ENCODE measurements at regions of chr1 and their contacts with region 1.

Region 1: GRCh38 chr1:226687426-226687825 is 51.7 kb downstream of the ITPKB start:
- DNase-seq: peak; percentile 74
- H3K4me3 Mint-ChIP-seq: peak overlapping the region; percentile 27
- H3K27ac Mint-ChIP-seq: peak overlapping the region; percentile 100
- H3K4me1 Mint-ChIP-seq: peaks cover 100% of the 10 kb centered on the region
- H3K27me3 Mint-ChIP-seq: no peaks in the 10 kb centered on the region

Region 2: DNA sequence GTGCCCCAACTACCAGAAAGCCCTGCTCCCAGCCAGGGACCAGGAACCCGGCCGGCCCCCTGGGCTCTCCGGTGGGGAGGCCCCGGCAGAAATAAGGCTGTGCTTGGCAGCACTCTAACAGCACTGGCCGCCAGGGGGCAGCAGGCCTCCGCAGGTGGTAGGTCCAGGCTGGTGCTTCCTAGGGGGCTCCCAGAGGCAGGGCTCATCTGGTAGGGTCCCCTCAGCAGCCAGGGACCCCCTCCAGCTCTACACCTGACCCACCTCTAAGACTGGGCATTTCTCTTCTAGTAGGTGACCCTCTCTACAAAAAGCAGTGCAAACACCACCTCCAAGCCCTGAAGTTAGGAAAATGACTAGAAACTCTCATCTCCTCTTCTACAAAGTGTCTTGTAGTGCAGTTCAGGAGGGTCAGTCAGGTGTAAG is 53.2 kb before region 1 on chr1:
- CTCF ChIA-PET with region 1: interaction called, 72 read pairs
- intact Hi-C with region 1: loop called (anchors 1 kb)
- DNase-seq: peak; percentile 87
- H3K4me3 Mint-ChIP-seq: no peak overlapping the region
- H3K27ac Mint-ChIP-seq: peak overlapping the region; percentile 3
- H3K4me1 Mint-ChIP-seq: peaks cover 46% of the 10 kb centered on the region
- H3K27me3 Mint-ChIP-seq: no peaks in the 10 kb centered on the region

Region 3: GRCh38 chr1:226649780-226650179 is 37.6 kb before region 1 on chr1:
- CTCF ChIA-PET with region 1: interaction called, 11 read pairs
- intact Hi-C with region 1: loop called (anchors 1 kb)
- DNase-seq: peak; percentile 67
- H3K4me3 Mint-ChIP-seq: no peak overlapping the region
- H3K27ac Mint-ChIP-seq: no peak overlapping the region
- H3K4me1 Mint-ChIP-seq: peaks cover 53% of the 10 kb centered on the region
- H3K27me3 Mint-ChIP-seq: no peaks in the 10 kb centered on the region

Region 4: GRCh38 chr1:226708342-226708780 is 20.9 kb after region 1 on chr1:
- CTCF ChIA-PET with region 1: interaction called, 9 read pairs
- intact Hi-C with region 1: loop called (anchors 1 kb)
- DNase-seq: peak; percentile 66
- H3K4me3 Mint-ChIP-seq: peak overlapping the region; percentile 71
- H3K27ac Mint-ChIP-seq: peak overlapping the region; percentile 99
- H3K4me1 Mint-ChIP-seq: peaks cover 90% of the 10 kb centered on the region
- H3K27me3 Mint-ChIP-seq: no peaks in the 10 kb centered on the region

Region 5: GRCh38 chr1:226882631-226883409 is 195.4 kb after region 1 on chr1:
- CTCF ChIA-PET with region 1: no interaction called
- intact Hi-C with region 1: loop called (anchors 2 kb)
- DNase-seq: peak; percentile 57
- H3K4me3 Mint-ChIP-seq: peak overlapping the region; percentile 74
- H3K27ac Mint-ChIP-seq: peak overlapping the region; percentile 93
- H3K4me1 Mint-ChIP-seq: peaks cover 51% of the 10 kb centered on the region
- H3K27me3 Mint-ChIP-seq: no peaks in the 10 kb centered on the region

Measured in activated naive CD4-positive, alpha-beta T cell treated with anti-CD3 and anti-CD28 coated beads for 36 hours (primary cell).